ENCODE measurements at regions of chr12 and their contacts with region 1.

Region 1: GRCh38 chr12:6873094-6874014 is at the start of gene SPSB2:
- DNase-seq: peak; percentile 99
- H3K4me3 Mint-ChIP-seq: peak within 1 kb of the TSS; percentile 78
- H3K27ac Mint-ChIP-seq: peak within 1 kb of the TSS; percentile 91
- H3K4me1 Mint-ChIP-seq: peaks cover 60% of the 10 kb centered on the region
- H3K27me3 Mint-ChIP-seq: no peaks in the 10 kb centered on the region
- total RNA-seq, gene SPSB2: 15.4 to 17.3 TPM

Region 2: GRCh38 chr12:6799147-6799546 is 74.2 kb before region 1 on chr12:
- CTCF ChIA-PET with region 1: no interaction called
- POLR2A ChIA-PET with region 1: no interaction called
- DNase-seq: no peak
- H3K4me3 Mint-ChIP-seq: no peak overlapping the region
- H3K27ac Mint-ChIP-seq: no peak overlapping the region
- H3K4me1 Mint-ChIP-seq: peaks cover 34% of the 10 kb centered on the region
- H3K27me3 Mint-ChIP-seq: no peaks in the 10 kb centered on the region

Region 3: DNA sequence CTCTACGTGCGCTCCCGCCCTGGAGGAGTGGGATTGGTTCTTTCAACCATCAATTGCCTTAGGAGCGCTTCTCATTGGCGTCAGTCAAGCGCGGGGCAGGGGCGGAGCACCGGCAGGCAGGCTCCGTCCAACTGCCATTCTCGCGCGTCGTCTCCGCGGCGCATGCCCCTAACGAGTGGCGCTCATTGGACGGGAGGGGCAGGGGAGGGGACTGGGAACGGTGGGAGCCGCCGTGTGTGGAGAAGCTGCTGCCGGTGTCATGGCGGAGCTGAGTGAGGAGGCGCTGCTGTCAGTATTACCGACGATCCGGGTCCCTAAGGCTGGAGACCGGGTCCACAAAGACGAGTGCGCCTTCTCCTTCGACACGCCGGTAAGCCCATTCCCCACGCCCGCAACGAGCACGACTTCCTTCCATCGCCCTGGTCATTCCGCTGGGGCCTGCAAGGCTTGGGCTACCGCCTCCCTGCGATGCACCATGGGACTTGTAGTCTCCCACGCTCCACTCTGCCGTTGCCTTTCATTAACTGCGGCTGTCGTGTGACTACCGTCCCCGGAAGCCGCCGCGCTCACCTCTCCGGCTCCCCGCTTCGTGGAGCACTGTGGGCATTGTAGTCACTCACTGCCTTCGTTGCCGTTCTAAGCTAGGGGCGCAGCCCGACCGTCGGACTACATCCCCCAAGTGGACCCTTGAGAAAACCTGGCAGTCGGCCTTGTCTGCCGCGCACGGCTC is 21.3 kb before region 1 on chr12 and contains the start of gene USP5:
- CTCF ChIA-PET with region 1: interaction called, 67 read pairs
- POLR2A ChIA-PET with region 1: interaction called, 23 read pairs
- DNase-seq: peak; percentile 99
- H3K4me3 Mint-ChIP-seq: peak within 1 kb of the TSS; percentile 84
- H3K27ac Mint-ChIP-seq: peak within 1 kb of the TSS; percentile 100
- H3K4me1 Mint-ChIP-seq: peaks cover 48% of the 10 kb centered on the region
- H3K27me3 Mint-ChIP-seq: no peaks in the 10 kb centered on the region
- total RNA-seq, gene USP5: 119 to 131 TPM

Region 4: DNA sequence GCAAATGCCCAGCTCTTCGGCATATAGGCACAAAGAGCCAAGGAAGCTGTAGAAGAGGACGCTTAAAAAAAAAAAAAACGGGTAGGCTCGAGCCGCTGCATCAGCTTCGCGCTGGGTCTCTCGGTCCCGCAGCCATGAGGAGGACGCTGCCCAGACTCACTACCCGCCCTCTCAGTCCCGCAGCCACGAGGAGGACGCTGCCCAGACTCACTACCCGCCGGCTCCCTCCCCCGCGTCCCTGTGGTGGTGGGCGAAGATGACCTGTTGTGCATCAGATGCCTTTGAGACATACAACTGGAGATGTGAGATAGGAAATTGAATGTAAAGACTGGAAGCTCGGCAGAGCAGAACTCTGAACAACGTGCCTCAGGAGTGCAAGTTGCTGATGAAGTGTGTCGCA is 11.2 kb after region 1 on chr12:
- CTCF ChIA-PET with region 1: interaction called, 45 read pairs
- POLR2A ChIA-PET with region 1: no interaction called
- DNase-seq: no peak
- H3K4me3 Mint-ChIP-seq: no peak overlapping the region
- H3K27ac Mint-ChIP-seq: no peak overlapping the region
- H3K4me1 Mint-ChIP-seq: peaks cover 4% of the 10 kb centered on the region
- H3K27me3 Mint-ChIP-seq: no peaks in the 10 kb centered on the region

Region 5: GRCh38 chr12:6904280-6905278 is 31.2 kb after region 1 on chr12 and contains the start of gene LRRC23:
- CTCF ChIA-PET with region 1: interaction called, 11 read pairs
- POLR2A ChIA-PET with region 1: no interaction called
- DNase-seq: peak; percentile 99
- H3K4me3 Mint-ChIP-seq: no peak within 1 kb of the TSS
- H3K27ac Mint-ChIP-seq: no peak within 1 kb of the TSS
- H3K4me1 Mint-ChIP-seq: peaks cover 11% of the 10 kb centered on the region
- H3K27me3 Mint-ChIP-seq: no peaks in the 10 kb centered on the region
- total RNA-seq, gene LRRC23: 4.4 to 5.2 TPM

Region 6: GRCh38 chr12:6937481-6938297 is 64.3 kb after region 1 on chr12:
- CTCF ChIA-PET with region 1: interaction called, 18 read pairs
- POLR2A ChIA-PET with region 1: interaction called, 4 read pairs
- DNase-seq: peak; percentile 95
- H3K4me3 Mint-ChIP-seq: peak overlapping the region; percentile 81
- H3K27ac Mint-ChIP-seq: peak overlapping the region; percentile 97
- H3K4me1 Mint-ChIP-seq: peaks cover 59% of the 10 kb centered on the region
- H3K27me3 Mint-ChIP-seq: no peaks in the 10 kb centered on the region

Region 7: GRCh38 chr12:6965026-6965661 is 91.8 kb after region 1 on chr12:
- CTCF ChIA-PET with region 1: interaction called, 24 read pairs
- POLR2A ChIA-PET with region 1: no interaction called
- DNase-seq: peak; percentile 91
- H3K4me3 Mint-ChIP-seq: no peak overlapping the region
- H3K27ac Mint-ChIP-seq: peak overlapping the region; percentile 85
- H3K4me1 Mint-ChIP-seq: peaks cover 68% of the 10 kb centered on the region
- H3K27me3 Mint-ChIP-seq: no peaks in the 10 kb centered on the region